ENCODE measurements at regions of chr4 and their contacts with region 1.

Region 1: DNA sequence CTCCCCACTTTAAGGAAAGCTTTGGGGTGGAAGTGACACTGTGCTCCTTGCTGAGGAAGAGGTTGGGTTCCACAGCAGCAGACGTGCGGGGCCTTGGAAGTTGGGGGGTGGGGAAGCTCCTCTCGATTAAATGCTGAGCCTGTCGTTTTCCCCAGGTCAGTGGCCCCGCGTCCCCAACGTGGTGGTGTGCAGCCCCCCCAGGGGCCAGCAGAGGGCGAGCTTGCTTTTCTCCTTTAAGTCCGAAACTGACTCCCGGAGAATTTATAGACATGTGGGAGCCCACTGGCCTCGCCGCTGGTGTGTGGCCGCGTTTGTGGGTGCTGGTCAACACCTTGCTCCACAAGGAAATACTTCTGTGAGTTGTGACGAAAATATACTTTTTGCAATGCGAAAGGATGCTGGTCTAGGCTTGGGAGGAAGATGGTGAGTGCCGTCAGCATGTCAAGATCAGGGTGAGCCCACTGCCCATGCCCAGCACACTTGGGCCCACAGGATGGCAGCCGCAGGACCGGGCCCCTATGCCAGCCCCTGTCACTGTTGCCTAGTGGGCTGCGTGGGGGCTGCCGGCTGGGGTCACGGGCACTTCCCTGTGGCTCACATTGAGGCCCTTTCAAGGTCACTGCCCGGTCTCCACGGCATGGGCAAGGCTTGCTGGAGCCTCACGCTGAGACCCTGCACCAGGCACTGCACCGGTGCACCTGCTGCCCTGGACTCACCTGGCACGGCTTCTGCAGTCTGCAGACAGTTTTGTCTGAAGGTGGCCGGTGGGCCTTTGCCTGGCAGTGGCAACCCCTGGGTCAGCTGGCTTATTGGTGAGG is 9.4 kb downstream of the UVSSA start:
- DNase-seq: peak; percentile 85
- ATAC-seq: peak; percentile 35

Region 2: DNA sequence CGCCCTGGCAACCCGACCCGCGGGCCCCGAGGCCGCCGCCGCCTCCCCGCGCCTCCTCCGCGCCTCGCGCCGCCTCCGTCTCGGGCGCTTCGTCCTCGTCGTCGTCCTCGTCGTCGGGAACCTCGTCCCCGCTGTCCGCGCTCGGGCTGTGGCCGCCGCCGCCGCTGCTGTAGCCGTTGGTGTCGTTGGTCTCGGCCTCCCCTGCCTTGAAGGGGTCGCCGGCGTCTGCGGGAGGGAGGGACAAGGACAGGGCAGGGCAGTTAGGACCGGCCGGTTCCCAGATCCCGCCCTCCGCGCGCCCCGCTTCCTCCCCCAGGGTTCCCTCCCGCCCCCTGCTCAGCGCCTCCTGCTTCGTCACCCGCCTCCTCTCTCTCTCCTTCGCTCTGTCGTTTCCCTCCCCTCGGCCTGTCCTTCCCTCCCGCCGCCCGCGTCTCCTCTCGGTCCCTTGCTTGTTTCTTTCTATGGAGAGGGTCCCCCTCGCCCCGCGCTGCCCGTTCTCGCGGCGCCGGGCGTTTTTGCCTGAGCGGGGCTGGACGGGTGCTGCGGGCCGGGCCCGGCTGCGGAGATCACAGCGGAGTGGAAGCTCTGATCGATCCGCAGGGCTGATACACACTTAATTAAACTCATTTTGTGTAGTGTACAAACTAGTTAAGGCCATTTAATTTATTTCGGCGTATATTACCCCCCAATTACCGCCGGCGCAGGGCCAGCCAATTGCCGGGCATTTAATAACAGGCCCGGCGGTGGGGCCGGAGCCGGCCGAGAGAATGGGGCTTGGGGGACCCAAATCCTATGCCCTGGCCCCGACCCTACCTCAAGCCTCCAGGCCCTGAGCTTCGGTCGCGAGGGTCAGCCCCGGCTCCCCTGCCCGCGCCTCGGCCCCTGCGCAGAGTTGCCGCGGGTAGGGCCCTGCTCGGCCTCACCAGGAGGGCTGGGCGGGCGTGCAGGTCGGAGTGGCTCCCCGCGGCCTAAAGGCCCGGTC is 47.5 kb after region 1 on chr4:
- intact Hi-C with region 1: no loop called
- DNase-seq: no peak
- ATAC-seq: no peak

Region 3: GRCh38 chr4:1512738-1513660 is 156.6 kb after region 1 on chr4:
- intact Hi-C with region 1: loop called (anchors 2 kb)
- DNase-seq: peak; percentile 64
- ATAC-seq: peak; percentile 52

Region 4: GRCh38 chr4:1628892-1629698 is 272.7 kb after region 1 on chr4:
- intact Hi-C with region 1: loop called (anchors 2 kb)
- DNase-seq: peak; percentile 87
- ATAC-seq: peak; percentile 77